Heart right ventricle (tissue), 16 donors: ENCODE measurements at regions of chr5 and their contacts with region 1.

Region 1: DNA sequence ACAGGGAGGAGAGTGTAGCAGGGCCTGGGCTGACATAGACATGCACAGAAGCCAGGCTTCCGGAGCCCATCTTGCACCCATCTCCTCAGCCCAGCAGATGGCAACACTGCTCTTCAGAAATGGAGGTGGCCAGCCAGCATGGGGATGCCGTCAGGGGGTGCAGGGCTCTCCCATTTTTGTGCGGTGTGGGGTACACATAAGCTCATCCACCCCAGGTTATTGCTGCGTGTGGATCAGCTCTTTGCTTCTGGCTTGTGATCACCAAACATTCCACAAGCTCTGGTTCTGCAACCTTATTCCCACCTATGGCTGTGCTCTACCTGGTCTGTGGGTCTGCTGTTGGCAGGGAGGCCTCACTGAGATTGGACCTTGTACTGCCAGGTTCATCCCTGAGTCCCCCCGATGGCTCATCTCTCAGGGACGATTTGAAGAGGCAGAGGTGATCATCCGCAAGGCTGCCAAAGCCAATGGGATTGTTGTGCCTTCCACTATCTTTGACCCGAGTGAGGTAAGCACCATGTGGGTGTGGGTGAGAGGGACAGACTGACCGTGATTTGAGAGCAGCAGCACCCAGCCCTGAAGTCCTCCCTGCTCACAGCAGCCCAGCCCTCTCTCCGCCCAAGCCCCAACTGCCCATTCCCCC is 17.3 kb downstream of the SLC22A5 start:
- DNase-seq: peak; percentile 65 to 77
- ATAC-seq: peak; percentile 76 to 94 (median 88)
- H3K4me3 ChIP-seq: no peak overlapping the region
- H3K27ac ChIP-seq: peak overlapping the region in 9 of 10 donors; percentile 70 to 95 (median 85)
- H3K4me1 ChIP-seq: peaks cover 18 to 68% (median 58%) of the 10 kb centered on the region in 9 donors
- H3K27me3 ChIP-seq: no peaks in the 10 kb centered on the region
- CTCF ChIP-seq: peak; percentile 66 to 93 (median 87)

Region 2: DNA sequence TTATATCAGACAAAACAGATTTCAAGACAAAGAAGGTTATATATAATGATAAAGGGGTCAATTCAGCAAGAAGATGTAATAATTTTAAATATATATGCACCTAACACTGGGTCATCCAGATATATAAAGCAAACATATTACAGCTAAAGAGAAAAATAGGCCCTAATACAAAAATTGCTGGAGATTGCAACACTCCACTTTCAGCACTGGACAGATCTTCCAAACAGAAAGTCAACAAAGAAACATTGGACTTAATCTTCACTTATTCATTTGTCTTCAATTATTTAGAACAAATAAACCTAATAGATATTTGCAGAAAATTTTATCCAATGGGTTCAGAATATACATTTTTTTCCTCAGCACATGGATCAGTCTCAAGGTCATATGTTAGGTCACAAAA is 487.1 kb before region 1 on chr5:
- intact Hi-C with region 1: no loop called
- DNase-seq: no peak
- ATAC-seq: no peak
- H3K4me3 ChIP-seq: no peak overlapping the region
- H3K27ac ChIP-seq: no peak overlapping the region
- H3K4me1 ChIP-seq: no peaks in the 10 kb centered on the region
- H3K27me3 ChIP-seq: no peaks in the 10 kb centered on the region
- CTCF ChIP-seq: no peak

Region 3: DNA sequence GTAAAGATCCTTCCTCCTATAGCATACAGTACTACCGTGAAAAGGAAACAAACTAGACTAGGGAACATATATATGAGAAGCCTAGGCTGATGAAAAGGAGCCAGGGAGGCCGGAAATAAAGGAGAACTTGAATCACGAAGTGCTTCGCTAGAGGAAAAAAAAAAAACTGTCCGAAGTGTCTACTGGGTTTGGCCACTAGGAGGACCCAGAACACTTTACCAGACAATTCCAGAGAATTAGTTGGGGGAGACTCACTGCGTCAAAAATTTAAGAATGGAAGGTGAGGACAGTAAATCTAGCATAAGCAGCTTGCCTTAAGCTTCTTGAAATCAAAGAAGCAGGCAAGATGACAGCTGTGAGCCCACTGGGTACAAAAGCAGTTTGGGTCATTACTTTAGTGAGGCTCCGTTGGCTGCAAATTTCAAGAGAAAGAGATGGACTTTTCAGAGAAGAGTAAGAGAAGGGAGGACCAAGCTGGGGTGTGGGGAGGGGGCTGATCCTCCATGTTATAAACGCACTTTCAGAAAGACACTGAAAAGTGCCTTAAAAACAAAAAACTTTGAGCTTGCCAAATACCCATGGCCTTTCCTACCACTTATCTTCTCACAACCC is 206.5 kb before region 1 on chr5:
- intact Hi-C with region 1: loop called in 1 of 10 experiments (anchors 10 kb)
- DNase-seq: peak in 1 of 2 donors; percentile 18
- ATAC-seq: peak in 6 of 8 donors; percentile 35 to 67 (median 53)
- H3K4me3 ChIP-seq: no peak overlapping the region
- H3K27ac ChIP-seq: no peak overlapping the region
- H3K4me1 ChIP-seq: peaks cover 0 to 18% (median 4%) of the 10 kb centered on the region in 9 donors
- H3K27me3 ChIP-seq: no peaks in the 10 kb centered on the region
- CTCF ChIP-seq: peak; percentile 31 to 80 (median 72)

Region 4: DNA sequence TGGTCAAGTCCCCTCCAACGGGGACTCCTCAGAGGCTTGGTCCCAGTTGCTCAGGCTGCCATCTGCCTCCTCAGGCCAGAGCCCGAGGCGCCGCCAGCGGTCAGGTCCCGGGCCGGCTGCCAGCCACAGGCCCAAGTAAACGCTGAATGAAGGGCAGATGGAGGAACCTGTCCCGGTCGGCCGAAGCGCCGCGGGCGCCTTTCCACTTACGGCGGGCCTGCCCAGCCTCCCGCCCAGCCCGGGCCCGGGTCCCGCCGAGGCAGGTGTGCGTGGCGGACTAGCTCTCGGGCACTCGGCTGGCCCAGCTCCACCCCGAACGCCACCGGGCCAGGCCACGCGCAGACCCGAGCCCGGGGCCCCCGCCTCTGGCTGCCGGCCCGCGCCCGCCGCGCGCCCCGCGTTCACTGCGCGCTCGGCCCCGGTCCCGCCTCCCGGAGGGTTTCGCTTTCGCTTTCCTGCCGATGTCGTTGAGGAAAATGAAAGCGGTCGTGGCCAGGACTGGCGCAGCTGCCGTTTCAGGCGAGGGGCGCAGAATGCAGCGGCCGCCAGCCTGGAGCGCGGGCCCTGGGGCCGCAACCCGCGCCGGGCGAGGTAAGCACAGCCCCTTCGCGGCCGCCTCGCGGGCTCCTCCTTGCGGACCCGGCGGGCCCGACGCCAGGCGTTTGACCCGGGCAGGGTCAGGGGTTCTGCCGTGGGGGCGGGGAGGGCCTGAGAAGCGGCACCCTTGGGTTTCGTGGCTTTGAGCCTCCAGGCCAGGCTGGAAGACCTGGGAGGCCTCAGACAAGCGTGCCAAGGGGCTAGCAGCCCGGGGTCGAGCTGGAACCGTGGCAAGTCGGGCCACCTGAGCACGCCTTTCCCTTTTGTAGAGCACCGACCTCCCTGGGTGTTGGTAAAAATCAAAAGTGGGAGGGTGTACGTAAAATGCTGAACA is 24.0 kb after region 1 on chr5:
- intact Hi-C with region 1: loop called in 1 of 10 experiments (anchors 2 kb)
- DNase-seq: peak; percentile 86 to 88
- ATAC-seq: peak; percentile 78 to 88 (median 82)
- H3K4me3 ChIP-seq: peak overlapping the region; percentile 64 to 87 (median 82)
- H3K27ac ChIP-seq: peak overlapping the region; percentile 97 to 100 (median 99)
- H3K4me1 ChIP-seq: peaks cover 0 to 76% (median 71%) of the 10 kb centered on the region in 9 donors
- H3K27me3 ChIP-seq: no peaks in the 10 kb centered on the region
- CTCF ChIP-seq: peak; percentile 43 to 77 (median 73)

Region 5: DNA sequence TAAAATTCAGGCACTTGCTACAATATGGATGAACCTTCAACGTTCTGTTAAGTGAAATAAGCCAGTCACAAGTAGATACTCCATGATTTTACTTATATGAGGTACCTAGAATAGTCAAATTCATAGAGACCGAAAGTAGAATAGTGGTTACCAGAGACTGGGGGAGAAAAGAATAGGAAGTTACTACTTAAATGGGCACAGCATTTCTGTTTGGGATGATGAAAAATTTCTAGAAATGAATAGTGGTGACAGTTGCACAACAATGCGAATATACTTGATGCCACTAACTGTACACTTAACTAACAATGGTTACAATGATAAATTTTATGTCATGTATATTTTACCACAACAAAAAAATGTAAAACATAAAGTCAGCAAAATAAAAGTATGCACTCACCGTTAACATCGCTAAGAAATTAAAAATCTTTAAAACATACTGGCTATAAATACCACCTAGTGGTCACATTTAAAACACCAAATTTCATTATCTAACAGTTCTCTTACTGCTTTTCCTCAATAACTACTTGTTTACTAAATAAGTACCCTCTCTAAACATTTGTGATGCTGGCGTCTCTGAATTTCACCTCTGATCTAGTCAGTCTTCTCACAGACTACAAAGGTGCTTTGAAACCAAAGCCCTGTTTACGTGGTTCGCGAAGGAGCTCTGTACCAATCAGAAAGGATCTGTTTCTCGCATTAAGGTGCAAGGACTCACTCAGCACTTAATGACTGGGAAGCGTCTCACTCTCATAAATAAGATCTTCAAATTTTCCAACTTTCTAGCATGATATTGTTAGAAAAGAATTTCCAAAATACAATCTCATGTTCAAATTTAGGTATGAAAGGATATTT is 327.9 kb after region 1 on chr5:
- intact Hi-C with region 1: loop called in 4 of 10 experiments (anchors 5 to 10 kb)
- DNase-seq: no peak
- ATAC-seq: no peak
- H3K4me3 ChIP-seq: no peak overlapping the region
- H3K27ac ChIP-seq: no peak overlapping the region
- H3K4me1 ChIP-seq: peaks cover 0 to 10% (median 0%) of the 10 kb centered on the region in 9 donors
- H3K27me3 ChIP-seq: no peaks in the 10 kb centered on the region
- CTCF ChIP-seq: peak; percentile 4 to 55 (median 42)

Region 6: GRCh38 chr5:132820162-132820754 is 433.5 kb after region 1 on chr5:
- intact Hi-C with region 1: loop called in 9 of 10 experiments (anchors 2 to 10 kb)
- DNase-seq: peak; percentile 88 to 91
- ATAC-seq: peak; percentile 68 to 91 (median 85)
- H3K4me3 ChIP-seq: peak overlapping the region in 2 of 10 donors; percentile 13 to 21
- H3K27ac ChIP-seq: no peak overlapping the region
- H3K4me1 ChIP-seq: peaks cover 0 to 18% (median 8%) of the 10 kb centered on the region in 9 donors
- H3K27me3 ChIP-seq: peaks cover 0 to 49% (median 3%) of the 10 kb centered on the region in 7 donors
- CTCF ChIP-seq: peak; percentile 87 to 93 (median 92)